GM18951 (cell line): ENCODE measurements at regions of chr16 and their contacts with region 1.

Region 1: DNA sequence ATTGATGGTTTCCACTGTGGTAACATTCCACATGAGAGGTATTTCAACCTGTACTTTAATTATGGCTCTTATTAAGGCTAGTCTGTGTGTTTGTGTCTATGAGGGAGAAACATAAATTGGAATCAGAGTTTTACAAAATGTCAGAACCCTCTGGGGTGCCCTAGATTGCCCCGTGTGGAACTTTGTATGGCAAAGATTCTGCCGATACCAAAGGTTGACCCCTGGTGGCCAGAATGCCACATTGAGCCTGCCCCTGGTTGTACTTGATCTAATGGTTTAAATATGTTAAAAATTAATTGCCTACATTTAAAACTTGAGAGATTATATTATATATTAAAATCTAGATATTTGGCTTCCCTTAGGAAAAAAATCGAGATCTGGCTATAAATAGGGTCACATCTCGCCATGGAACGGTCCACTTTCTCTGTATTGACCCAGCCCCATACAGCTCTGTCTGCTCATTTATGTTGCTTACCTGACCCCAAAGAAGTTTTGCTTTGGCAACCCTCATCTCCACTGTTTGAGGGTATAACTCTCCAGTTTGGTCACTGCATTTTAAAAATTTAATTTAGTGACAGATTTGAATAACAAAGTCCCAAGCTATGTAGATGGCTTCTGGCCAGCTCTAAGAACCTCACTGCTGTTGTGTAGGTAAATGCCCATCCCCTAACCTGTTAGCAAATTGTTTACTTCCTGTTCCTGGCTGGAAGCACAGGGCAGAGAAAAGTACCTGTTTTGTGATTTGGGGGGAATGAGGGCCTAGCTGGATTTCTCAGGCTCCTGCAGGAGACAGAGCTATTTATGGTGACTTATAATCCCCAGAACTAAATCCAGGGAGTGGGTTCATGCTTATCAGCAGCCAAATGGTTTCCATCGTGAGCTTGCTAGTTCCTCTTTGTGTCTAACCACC is 95.0 kb downstream of the PLCG2 start:
- POLR2A ChIP-seq: no peak

Region 2: DNA sequence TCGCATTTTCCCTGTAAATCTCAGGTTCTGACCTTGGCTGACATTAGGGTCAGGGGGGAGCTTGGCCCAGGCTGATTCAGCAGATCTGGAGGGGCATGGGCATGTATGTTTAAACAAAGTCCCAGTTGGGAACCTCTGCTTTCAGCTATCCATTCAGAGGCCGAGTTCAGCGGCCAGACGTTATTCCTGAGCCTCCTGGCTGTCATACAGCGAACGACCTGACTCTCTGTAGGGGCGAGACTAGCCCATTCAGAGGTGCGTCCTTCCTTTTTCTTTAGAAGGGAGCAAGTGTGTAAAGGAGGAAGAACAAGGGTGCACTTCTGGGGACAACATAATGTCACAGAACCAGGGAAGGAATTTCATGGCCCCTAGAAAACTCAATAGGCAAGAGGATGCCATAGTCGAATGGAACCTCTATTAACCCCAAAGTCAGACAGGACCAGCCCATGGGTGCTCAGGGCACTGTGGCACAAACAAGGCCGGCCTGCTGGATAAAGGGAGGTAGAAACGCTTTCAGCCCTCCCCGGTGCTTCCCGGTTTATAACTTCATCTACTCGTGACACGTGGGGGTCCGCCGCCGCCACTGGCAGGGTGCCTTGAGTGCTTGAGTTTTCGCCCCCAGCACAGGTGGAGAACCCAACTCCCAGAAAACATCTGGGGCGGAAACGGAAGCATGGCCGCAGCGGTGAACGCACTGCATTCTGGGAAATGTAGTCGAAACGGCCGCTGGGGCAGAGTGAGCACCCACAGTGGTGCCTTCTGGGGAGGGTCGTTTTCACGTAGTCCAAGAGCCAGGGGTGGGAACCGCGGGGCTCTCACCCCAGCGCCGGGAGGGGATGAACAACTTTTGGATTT is 128.2 kb before region 1 on chr16:
- in situ Hi-C with region 1: loop called (anchors 10 kb)
- POLR2A ChIP-seq: peak; percentile 66

Region 3: GRCh38 chr16:82293671-82294070 is 419.6 kb after region 1 on chr16:
- in situ Hi-C with region 1: no loop called
- POLR2A ChIP-seq: no peak